ENCODE measurements at regions of chr13 and their contacts with region 1.

Region 1: GRCh38 chr13:108534728-108535127 is 94.7 kb upstream of the MYO16 start:
- DNase-seq: no peak
- ATAC-seq: no peak
- H3K4me3 ChIP-seq: no peak overlapping the region
- H3K27ac ChIP-seq: no peak overlapping the region
- H3K4me1 ChIP-seq: no peaks in the 10 kb centered on the region
- H3K27me3 ChIP-seq: peaks cover 0 to 7% (median 0%) of the 10 kb centered on the region in 7 donors
- CTCF ChIP-seq: no peak

Region 2: GRCh38 chr13:108227651-108228272 is 307.0 kb before region 1 on chr13:
- intact Hi-C with region 1: no loop called
- DNase-seq: peak in 1 of 2 donors; percentile 24
- ATAC-seq: no peak
- H3K4me3 ChIP-seq: no peak overlapping the region
- H3K27ac ChIP-seq: no peak overlapping the region
- H3K4me1 ChIP-seq: peaks cover 4 to 54% (median 38%) of the 10 kb centered on the region in 9 donors
- H3K27me3 ChIP-seq: no peaks in the 10 kb centered on the region
- CTCF ChIP-seq: peak; percentile 73 to 87 (median 81)

Region 3: GRCh38 chr13:108407495-108407894 is 127.2 kb before region 1 on chr13:
- intact Hi-C with region 1: no loop called
- DNase-seq: no peak
- ATAC-seq: no peak
- H3K4me3 ChIP-seq: no peak overlapping the region
- H3K27ac ChIP-seq: no peak overlapping the region
- H3K4me1 ChIP-seq: no peaks in the 10 kb centered on the region
- H3K27me3 ChIP-seq: no peaks in the 10 kb centered on the region
- CTCF ChIP-seq: no peak

Region 4: DNA sequence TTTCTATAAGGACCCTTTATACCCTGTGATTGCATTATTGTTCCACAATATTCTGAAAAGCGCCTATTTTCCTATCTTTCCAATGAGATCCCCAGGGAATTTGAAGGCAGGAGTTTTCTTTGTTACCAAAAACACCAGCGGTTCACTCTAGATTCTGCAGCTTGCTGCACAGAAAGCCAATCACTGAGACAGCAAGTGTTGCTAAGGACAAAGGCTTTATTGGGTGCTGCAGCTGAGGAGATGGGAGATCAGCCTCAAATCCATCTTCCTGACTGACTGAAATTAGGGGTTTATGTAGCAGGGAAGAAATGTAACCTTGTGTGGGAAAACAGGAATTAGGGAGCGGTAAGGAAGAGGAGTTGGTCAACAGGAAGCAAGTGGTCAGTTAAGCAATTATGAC is 52.1 kb after region 1 on chr13:
- intact Hi-C with region 1: loop called in 1 of 10 experiments (anchors 5 kb)
- DNase-seq: no peak
- ATAC-seq: no peak
- H3K4me3 ChIP-seq: no peak overlapping the region
- H3K27ac ChIP-seq: no peak overlapping the region
- H3K4me1 ChIP-seq: no peaks in the 10 kb centered on the region
- H3K27me3 ChIP-seq: peaks cover 0 to 5% (median 0%) of the 10 kb centered on the region in 7 donors
- CTCF ChIP-seq: no peak

Measured in heart right ventricle (tissue), 16 donors.